Heart left ventricle (tissue), 16 donors: ENCODE measurements at regions of chr12 and their contacts with region 1.

Region 1: DNA sequence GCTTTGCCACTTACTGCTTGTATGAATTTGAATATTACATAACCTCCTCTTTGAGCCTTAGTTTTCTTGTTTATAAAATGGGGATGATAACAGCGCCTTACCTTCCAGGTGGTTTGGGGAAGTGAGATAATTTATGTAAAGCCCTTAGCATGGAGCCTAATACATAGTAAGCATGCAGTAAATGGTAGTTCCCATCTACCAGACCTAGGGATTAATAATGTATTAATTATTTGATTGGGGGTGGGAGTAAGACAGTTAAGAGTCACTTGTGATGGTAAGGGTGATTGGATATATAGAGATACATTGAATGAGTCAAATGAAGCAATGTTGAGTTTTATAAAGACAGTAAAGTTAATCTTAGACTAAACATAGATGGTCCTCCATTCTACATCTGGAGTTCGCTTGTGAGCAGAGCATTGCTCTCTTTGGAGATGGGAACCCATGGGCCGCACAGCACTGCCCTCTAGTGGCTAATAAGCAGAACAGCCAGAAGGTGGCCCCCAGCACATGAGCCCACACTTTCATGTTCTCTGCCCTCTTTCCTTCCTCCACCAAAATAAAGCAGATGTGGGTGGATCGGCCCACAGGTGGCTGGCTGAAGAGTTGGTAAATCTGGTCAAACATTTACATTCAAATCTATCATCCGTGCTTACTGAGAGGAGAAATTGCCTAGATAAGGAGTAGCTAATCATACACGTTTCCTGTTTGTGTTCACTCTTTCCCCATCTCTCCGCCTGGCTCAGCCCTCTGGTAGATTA is 26.5 kb upstream of the TAMALIN start:
- DNase-seq: peak; percentile 56 to 76 (median 70)
- ATAC-seq: peak; percentile 74 to 92 (median 90)
- H3K4me3 ChIP-seq: no peak overlapping the region
- H3K27ac ChIP-seq: no peak overlapping the region
- H3K4me1 ChIP-seq: peaks cover 0 to 38% (median 0%) of the 10 kb centered on the region in 12 donors
- H3K27me3 ChIP-seq: no peaks in the 10 kb centered on the region
- CTCF ChIP-seq: peak; percentile 91 to 99 (median 98)
- POLR2A ChIP-seq: no peak

Region 2: GRCh38 chr12:51879102-51879501 is 101.1 kb before region 1 on chr12:
- intact Hi-C with region 1: loop called in 1 of 10 experiments (anchors 5 kb)
- DNase-seq: no peak
- ATAC-seq: no peak
- H3K4me3 ChIP-seq: no peak overlapping the region
- H3K27ac ChIP-seq: no peak overlapping the region
- H3K4me1 ChIP-seq: no peaks in the 10 kb centered on the region
- H3K27me3 ChIP-seq: no peaks in the 10 kb centered on the region
- CTCF ChIP-seq: no peak
- POLR2A ChIP-seq: no peak

Region 3: DNA sequence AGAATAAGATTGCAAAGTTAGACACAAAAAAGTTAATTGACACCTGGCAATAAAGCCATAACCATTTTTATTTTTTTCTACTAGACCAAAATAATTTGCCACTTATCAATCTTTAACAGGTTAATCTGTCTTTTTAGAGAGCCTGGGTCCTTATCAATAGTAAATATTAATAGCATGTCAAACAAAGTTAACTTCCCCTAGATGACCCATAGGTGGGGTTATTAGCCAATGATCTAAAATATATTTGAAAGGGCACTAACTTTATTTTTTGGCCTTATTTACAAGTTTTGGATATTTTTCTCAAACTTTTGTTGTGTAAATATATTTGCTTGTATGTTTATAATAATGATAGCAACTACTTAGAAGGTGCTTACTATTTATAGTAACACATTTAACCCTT is 88.4 kb before region 1 on chr12:
- intact Hi-C with region 1: loop called (anchors 1 to 2 kb)
- DNase-seq: no peak
- ATAC-seq: no peak
- H3K4me3 ChIP-seq: no peak overlapping the region
- H3K27ac ChIP-seq: no peak overlapping the region
- H3K4me1 ChIP-seq: peaks cover 3 to 29% (median 18%) of the 10 kb centered on the region in 12 donors
- H3K27me3 ChIP-seq: no peaks in the 10 kb centered on the region
- CTCF ChIP-seq: peak; percentile 23 to 55 (median 39)
- POLR2A ChIP-seq: no peak

Region 4: GRCh38 chr12:51898937-51899336 is 81.3 kb before region 1 on chr12:
- intact Hi-C with region 1: loop called in 8 of 10 experiments (anchors 1 to 2 kb)
- DNase-seq: peak in 1 of 5 donors; percentile 37
- ATAC-seq: no peak
- H3K4me3 ChIP-seq: no peak overlapping the region
- H3K27ac ChIP-seq: peak overlapping the region in 2 of 12 donors; percentile 40 to 53
- H3K4me1 ChIP-seq: peaks cover 5 to 44% (median 31%) of the 10 kb centered on the region in 12 donors
- H3K27me3 ChIP-seq: no peaks in the 10 kb centered on the region
- CTCF ChIP-seq: no peak
- POLR2A ChIP-seq: no peak

Region 5: DNA sequence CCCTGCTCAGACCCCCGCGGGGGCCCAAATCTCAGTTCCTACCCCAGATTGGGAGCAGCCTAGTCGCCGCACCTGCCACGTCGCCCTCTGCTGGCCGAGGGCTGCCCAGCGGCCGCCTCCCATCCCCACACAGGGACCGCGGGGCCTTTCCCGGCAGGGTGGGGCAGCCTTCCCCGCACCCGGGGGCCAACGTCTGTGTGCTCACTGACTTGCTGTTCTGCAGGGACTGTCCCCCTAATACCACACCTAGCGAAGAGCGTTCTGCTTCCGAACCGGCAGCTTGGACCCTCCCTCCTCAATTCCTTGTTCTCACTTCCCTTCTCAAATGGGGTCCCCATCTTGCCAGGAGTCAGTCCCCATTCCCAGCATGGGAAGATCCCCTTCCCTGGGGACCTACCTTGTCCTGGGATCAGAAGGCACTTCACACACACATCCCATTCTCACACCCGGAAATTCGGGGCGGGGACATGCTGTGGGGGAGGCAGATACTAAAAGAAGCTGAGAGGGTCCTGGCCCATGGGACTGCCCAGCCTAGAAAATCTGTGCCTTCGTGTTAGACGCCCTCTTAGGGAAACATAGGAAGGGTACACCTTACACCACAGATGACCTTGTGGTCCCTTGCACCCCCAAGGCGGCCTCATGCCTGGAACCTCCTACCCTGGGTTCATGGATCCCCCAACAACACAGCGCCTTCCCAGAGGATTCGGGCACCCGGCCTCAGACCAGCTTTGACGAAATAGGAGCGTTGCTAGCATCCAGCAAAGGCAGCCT is 56.5 kb before region 1 on chr12:
- intact Hi-C with region 1: loop called in 3 of 10 experiments (anchors 2 to 10 kb)
- DNase-seq: peak; percentile 66 to 88 (median 71)
- ATAC-seq: peak; percentile 65 to 81 (median 76)
- H3K4me3 ChIP-seq: peak overlapping the region in 8 of 12 donors; percentile 5 to 43 (median 26)
- H3K27ac ChIP-seq: peak overlapping the region; percentile 51 to 92 (median 77)
- H3K4me1 ChIP-seq: peaks cover 0 to 47% (median 28%) of the 10 kb centered on the region in 12 donors
- H3K27me3 ChIP-seq: no peaks in the 10 kb centered on the region
- CTCF ChIP-seq: peak; percentile 83 to 97 (median 89)
- POLR2A ChIP-seq: peak in 1 of 2 donors; percentile 18

Region 6: GRCh38 chr12:52338241-52338960 is 358.2 kb after region 1 on chr12:
- intact Hi-C with region 1: no loop called
- DNase-seq: no peak
- ATAC-seq: peak in 1 of 4 donors; percentile 27
- H3K4me3 ChIP-seq: no peak overlapping the region
- H3K27ac ChIP-seq: no peak overlapping the region
- H3K4me1 ChIP-seq: no peaks in the 10 kb centered on the region
- H3K27me3 ChIP-seq: peaks cover 0 to 17% (median 0%) of the 10 kb centered on the region in 9 donors
- CTCF ChIP-seq: no peak
- POLR2A ChIP-seq: no peak